Activated T-helper 1 cell treated with anti-CD3 and anti-CD28 coated beads, Interleukin-12 subunit alpha, Interleukin-12 subunit beta, Interleukin-2, Interleukin-4 antibody, amounts not matched to agents 30 ng/mL and 10 ng/mL and 1 ng/mL, durations not matched to agents 14 hours and 24 hours and 36 hours (primary cell): ENCODE measurements at regions of chr6 and their contacts with region 1.

Region 1: DNA sequence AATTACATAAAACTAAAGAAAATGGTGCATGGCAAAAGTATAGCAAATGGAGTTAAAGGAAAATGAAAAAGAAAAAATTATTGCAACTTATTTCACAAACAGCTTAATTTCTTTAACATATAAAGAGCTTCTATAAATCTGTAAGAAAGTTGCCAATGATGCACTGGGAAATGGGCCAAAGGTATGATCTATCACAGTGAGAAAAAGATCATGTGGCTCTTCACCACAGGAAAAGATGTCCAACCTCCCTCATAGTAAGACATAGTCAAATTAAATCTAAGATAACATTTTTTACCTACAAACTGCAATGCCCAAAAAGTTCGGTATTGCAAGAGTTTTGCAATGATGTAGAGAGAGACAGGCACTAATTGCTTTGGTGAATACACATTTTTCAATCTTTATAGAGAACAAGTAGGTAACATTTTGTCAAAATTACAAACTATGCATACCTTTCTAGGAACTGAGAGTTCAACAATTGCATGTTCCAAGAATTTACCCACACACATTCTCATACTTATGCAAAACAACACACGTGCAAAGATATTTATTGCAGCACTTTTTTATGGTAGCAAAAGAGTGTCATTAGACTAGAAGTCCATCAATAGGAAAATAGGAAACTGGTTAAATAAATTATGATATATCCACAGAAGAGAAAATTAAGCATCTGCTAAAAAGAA is 372.6 kb downstream of the QKI start:
- DNase-seq: no peak
- H3K4me3 Mint-ChIP-seq: no peak overlapping the region
- H3K27ac Mint-ChIP-seq: no peak overlapping the region
- H3K4me1 Mint-ChIP-seq: peaks cover 15% of the 10 kb centered on the region
- H3K27me3 Mint-ChIP-seq: peaks cover 6% of the 10 kb centered on the region

Region 2: GRCh38 chr6:163750431-163751031 is 36.6 kb before region 1 on chr6:
- intact Hi-C with region 1: loop called (anchors 2 kb)
- DNase-seq: peak; percentile 7
- H3K4me3 Mint-ChIP-seq: peak overlapping the region; percentile 56
- H3K27ac Mint-ChIP-seq: peak overlapping the region; percentile 90
- H3K4me1 Mint-ChIP-seq: peaks cover 16% of the 10 kb centered on the region
- H3K27me3 Mint-ChIP-seq: peaks cover 8% of the 10 kb centered on the region

Region 3: GRCh38 chr6:164048840-164049516 is 261.8 kb after region 1 on chr6:
- intact Hi-C with region 1: no loop called
- DNase-seq: no peak
- H3K4me3 Mint-ChIP-seq: no peak overlapping the region
- H3K27ac Mint-ChIP-seq: no peak overlapping the region
- H3K4me1 Mint-ChIP-seq: no peaks in the 10 kb centered on the region
- H3K27me3 Mint-ChIP-seq: no peaks in the 10 kb centered on the region

Region 4: GRCh38 chr6:164273491-164273890 is 486.4 kb after region 1 on chr6:
- intact Hi-C with region 1: no loop called
- DNase-seq: no peak
- H3K4me3 Mint-ChIP-seq: no peak overlapping the region
- H3K27ac Mint-ChIP-seq: no peak overlapping the region
- H3K4me1 Mint-ChIP-seq: no peaks in the 10 kb centered on the region
- H3K27me3 Mint-ChIP-seq: no peaks in the 10 kb centered on the region

Region 5: DNA sequence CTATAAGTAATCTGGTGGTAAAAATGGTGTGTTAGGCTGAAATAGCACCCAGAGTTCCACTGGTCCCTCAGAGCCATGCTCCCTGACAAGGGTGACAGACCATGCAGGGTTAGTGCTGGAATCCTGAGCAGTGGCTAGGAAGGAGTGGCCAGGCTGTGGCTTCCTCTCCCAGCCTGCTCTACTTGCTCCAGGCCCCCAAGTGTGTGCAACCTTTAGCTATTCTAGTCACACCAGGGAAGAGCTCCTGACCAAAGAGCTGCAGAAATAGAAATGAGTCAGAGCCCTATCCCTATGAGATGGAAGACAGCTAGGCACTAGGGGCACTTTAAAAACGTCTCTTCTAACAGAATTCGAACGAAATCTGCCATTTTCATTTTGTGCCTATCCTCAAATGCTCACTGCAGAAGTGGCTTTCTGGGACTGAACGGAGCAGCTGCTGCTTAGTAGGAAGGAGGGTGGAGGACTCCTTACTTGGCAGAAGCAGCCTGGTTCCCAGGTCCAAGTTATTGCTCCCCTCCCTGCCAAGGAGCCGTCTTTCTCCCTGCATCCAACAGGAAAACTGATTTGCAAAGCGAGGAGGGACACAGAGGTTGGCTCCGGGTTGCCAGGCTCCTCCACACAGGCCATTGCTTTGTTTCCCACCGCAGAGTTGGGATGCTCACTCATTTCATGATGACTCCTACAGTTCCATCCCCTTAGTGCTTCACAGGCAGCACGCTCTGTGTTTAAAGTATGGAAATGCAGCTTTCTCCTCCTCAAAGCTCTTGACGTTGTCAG is 767.8 kb after region 1 on chr6:
- intact Hi-C with region 1: no loop called
- DNase-seq: no peak
- H3K4me3 Mint-ChIP-seq: no peak overlapping the region
- H3K27ac Mint-ChIP-seq: no peak overlapping the region
- H3K4me1 Mint-ChIP-seq: no peaks in the 10 kb centered on the region
- H3K27me3 Mint-ChIP-seq: no peaks in the 10 kb centered on the region